CD14-positive monocyte (primary cell): ENCODE measurements at regions of chr14 and their contacts with region 1.

Region 1: DNA sequence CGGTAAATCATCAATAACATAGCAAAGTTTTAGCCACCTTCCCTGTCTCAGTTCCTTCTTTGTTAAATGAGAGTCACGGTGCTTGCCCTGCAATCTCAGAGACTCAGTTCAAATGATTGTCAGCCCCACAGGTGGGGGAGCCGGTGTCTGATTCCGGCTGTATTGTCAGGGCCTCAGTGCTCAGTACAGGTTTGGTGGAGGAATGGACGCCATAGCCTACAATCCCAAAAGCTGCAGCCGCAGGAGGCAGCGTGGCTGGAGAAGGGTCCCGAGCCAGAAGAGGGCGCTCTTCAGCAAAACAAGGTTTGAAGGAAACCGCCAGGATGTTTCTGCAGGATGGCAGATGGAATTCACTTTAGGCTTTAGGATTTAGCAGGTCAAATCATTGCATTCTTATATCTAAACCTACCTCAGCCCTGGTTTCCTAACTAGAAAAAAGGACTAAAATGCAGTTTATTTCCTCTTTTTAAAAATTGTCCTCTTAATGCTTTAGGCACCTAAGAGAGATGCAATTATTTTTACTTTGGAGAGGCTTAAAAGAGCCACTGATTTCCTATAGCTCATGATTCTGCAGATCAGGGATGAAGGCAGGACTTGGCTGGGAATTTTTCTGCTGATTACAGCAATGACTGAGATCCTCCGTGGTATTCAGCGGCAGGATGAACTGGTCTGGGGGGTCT is 29.2 kb downstream of the FOS start:
- DNase-seq: peak; percentile 68 to 79 (median 77)
- H3K4me3 ChIP-seq: no peak overlapping the region
- H3K4me3 Mint-ChIP-seq: no peak overlapping the region
- H3K27ac ChIP-seq: no peak overlapping the region
- H3K27ac Mint-ChIP-seq: peak overlapping the region in 4 of 7 donors; percentile 36 to 83 (median 73)
- H3K4me1 ChIP-seq: peaks cover 23 to 27% of the 10 kb centered on the region in 2 donors
- H3K4me1 Mint-ChIP-seq: peaks cover 41% of the 10 kb centered on the region
- H3K27me3 ChIP-seq: no peaks in the 10 kb centered on the region
- H3K27me3 Mint-ChIP-seq: no peaks in the 10 kb centered on the region
- CTCF ChIP-seq: peak; percentile 87

Region 2: DNA sequence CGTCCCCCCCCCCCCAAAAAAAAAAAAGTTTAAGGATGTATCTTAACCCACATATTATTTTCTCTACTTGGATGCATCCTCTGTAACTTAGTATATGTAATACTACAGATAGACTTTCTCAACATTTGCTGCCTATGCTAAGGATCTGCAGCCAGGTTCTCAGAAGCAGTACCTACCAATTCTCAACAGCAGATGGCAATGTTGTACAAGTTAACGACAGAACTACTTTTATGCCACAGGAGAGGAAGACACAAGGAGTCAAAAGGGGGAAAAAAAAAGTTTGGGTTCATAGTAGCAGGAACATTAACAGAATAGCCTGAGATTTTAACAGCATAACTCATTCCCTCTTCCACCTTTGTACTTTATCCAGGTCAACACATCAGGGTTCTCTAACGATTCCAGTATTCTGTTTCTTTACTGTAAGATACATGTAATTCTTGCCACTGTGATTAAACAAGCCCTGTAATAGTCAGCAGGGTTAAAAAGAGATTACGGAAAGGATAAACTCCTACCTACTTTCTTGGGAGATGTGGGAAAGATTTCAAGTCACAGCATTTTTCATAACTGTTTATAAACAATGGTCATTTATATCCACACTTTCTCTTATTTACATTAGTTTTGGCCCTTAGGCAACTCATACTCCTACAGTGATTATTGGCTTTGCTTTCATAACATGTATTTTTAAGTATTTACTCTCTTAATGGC is 175.3 kb before region 1 on chr14:
- intact Hi-C with region 1: loop called (anchors 2 kb)
- DNase-seq: peak; percentile 64 to 85 (median 74)
- H3K4me3 ChIP-seq: no peak overlapping the region
- H3K4me3 Mint-ChIP-seq: no peak overlapping the region
- H3K27ac ChIP-seq: no peak overlapping the region
- H3K27ac Mint-ChIP-seq: peak overlapping the region in 6 of 7 donors; percentile 24 to 78 (median 55)
- H3K4me1 ChIP-seq: peaks cover 10 to 13% of the 10 kb centered on the region in 2 donors
- H3K4me1 Mint-ChIP-seq: peaks cover 14% of the 10 kb centered on the region
- H3K27me3 ChIP-seq: no peaks in the 10 kb centered on the region
- H3K27me3 Mint-ChIP-seq: no peaks in the 10 kb centered on the region
- CTCF ChIP-seq: peak; percentile 69

Region 3: GRCh38 chr14:75273272-75274049 is 34.4 kb before region 1 on chr14:
- intact Hi-C with region 1: no loop called
- DNase-seq: peak; percentile 76 to 84 (median 83)
- H3K4me3 ChIP-seq: no peak overlapping the region
- H3K4me3 Mint-ChIP-seq: no peak overlapping the region
- H3K27ac ChIP-seq: peak overlapping the region; percentile 92 to 98
- H3K27ac Mint-ChIP-seq: peak overlapping the region; percentile 97 to 100 (median 99)
- H3K4me1 ChIP-seq: peaks cover 73 to 75% of the 10 kb centered on the region in 2 donors
- H3K4me1 Mint-ChIP-seq: peaks cover 64% of the 10 kb centered on the region
- H3K27me3 ChIP-seq: no peaks in the 10 kb centered on the region
- H3K27me3 Mint-ChIP-seq: peaks cover 0 to 8% (median 1%) of the 10 kb centered on the region in 3 donors
- CTCF ChIP-seq: no peak

Region 4: GRCh38 chr14:75283882-75284563 is 23.8 kb before region 1 on chr14:
- intact Hi-C with region 1: loop called in 1 of 2 experiments (anchors 2 kb)
- DNase-seq: peak; percentile 86 to 93 (median 93)
- H3K4me3 ChIP-seq: peak overlapping the region in 1 of 3 experiments; percentile 91
- H3K4me3 Mint-ChIP-seq: peak overlapping the region; percentile 72 to 100
- H3K27ac ChIP-seq: peak overlapping the region; percentile 80 to 98
- H3K27ac Mint-ChIP-seq: peak overlapping the region; percentile 94 to 100 (median 98)
- H3K4me1 ChIP-seq: peaks cover 74 to 77% of the 10 kb centered on the region in 2 donors
- H3K4me1 Mint-ChIP-seq: peaks cover 82% of the 10 kb centered on the region
- H3K27me3 ChIP-seq: no peaks in the 10 kb centered on the region
- H3K27me3 Mint-ChIP-seq: peaks cover 0 to 37% (median 7%) of the 10 kb centered on the region in 3 donors
- CTCF ChIP-seq: peak; percentile 13

Region 5: GRCh38 chr14:75383721-75384120 is 75.9 kb after region 1 on chr14:
- intact Hi-C with region 1: no loop called
- DNase-seq: peak; percentile 72 to 82 (median 77)
- H3K4me3 ChIP-seq: peak overlapping the region in 1 of 3 experiments; percentile 31
- H3K4me3 Mint-ChIP-seq: peak overlapping the region in 1 of 2 donors; percentile 23
- H3K27ac ChIP-seq: peak overlapping the region in 1 of 2 donors; percentile 67
- H3K27ac Mint-ChIP-seq: peak overlapping the region; percentile 79 to 95 (median 91)
- H3K4me1 ChIP-seq: peaks cover 19 to 24% of the 10 kb centered on the region in 2 donors
- H3K4me1 Mint-ChIP-seq: peaks cover 20% of the 10 kb centered on the region
- H3K27me3 ChIP-seq: no peaks in the 10 kb centered on the region
- H3K27me3 Mint-ChIP-seq: peaks cover 0 to 3% (median 2%) of the 10 kb centered on the region in 3 donors
- CTCF ChIP-seq: no peak

Region 6: GRCh38 chr14:75487155-75487671 is 179.4 kb after region 1 on chr14:
- intact Hi-C with region 1: loop called (anchors 2 to 5 kb)
- DNase-seq: no peak
- H3K4me3 ChIP-seq: no peak overlapping the region
- H3K4me3 Mint-ChIP-seq: no peak overlapping the region
- H3K27ac ChIP-seq: no peak overlapping the region
- H3K27ac Mint-ChIP-seq: no peak overlapping the region
- H3K4me1 ChIP-seq: no peaks in the 10 kb centered on the region
- H3K4me1 Mint-ChIP-seq: peaks cover 2% of the 10 kb centered on the region
- H3K27me3 ChIP-seq: no peaks in the 10 kb centered on the region
- H3K27me3 Mint-ChIP-seq: peaks cover 0 to 4% (median 2%) of the 10 kb centered on the region in 3 donors
- CTCF ChIP-seq: no peak